A549 (cell line): ENCODE measurements at regions of chr10 and their contacts with region 1.

Region 1: GRCh38 chr10:75099952-75100763 is 11.3 kb upstream of the SAMD8 start:
- DNase-seq: peak; percentile 67 to 85
- ATAC-seq: peak; percentile 82 to 96
- H3K4me3 ChIP-seq: no peak overlapping the region
- H3K27ac ChIP-seq: peak overlapping the region in 1 of 2 experiments; percentile 55; a peak in 2 of 6 replicates
- H3K4me1 ChIP-seq: no peaks in the 10 kb centered on the region; the same call in 2 of the 3 replicates
- CTCF ChIP-seq: peak; percentile 94
- EP300 ChIP-seq: no peak
- POLR2A ChIP-seq: no peak
- RAD21 ChIP-seq: peak; percentile 97

Region 2: GRCh38 chr10:74244097-74244685 is 856.0 kb before region 1 on chr10:
- CTCF ChIA-PET with region 1: interaction called, 210 read pairs
- POLR2A ChIA-PET with region 1: no interaction called
- DNase-seq: peak in 1 of 2 experiments; percentile 61
- ATAC-seq: no peak
- H3K4me3 ChIP-seq: no peak overlapping the region
- H3K27ac ChIP-seq: no peak overlapping the region
- H3K4me1 ChIP-seq: no peaks in the 10 kb centered on the region
- CTCF ChIP-seq: peak; percentile 85
- EP300 ChIP-seq: no peak
- POLR2A ChIP-seq: no peak
- RAD21 ChIP-seq: peak; percentile 67 to 78

Region 3: GRCh38 chr10:74262856-74263255 is 837.3 kb before region 1 on chr10:
- CTCF ChIA-PET with region 1: interaction called, 20 read pairs
- POLR2A ChIA-PET with region 1: no interaction called
- DNase-seq: no peak
- ATAC-seq: no peak
- H3K4me3 ChIP-seq: no peak overlapping the region
- H3K27ac ChIP-seq: no peak overlapping the region
- H3K4me1 ChIP-seq: no peaks in the 10 kb centered on the region
- CTCF ChIP-seq: no peak
- EP300 ChIP-seq: no peak
- POLR2A ChIP-seq: no peak
- RAD21 ChIP-seq: no peak

Region 4: DNA sequence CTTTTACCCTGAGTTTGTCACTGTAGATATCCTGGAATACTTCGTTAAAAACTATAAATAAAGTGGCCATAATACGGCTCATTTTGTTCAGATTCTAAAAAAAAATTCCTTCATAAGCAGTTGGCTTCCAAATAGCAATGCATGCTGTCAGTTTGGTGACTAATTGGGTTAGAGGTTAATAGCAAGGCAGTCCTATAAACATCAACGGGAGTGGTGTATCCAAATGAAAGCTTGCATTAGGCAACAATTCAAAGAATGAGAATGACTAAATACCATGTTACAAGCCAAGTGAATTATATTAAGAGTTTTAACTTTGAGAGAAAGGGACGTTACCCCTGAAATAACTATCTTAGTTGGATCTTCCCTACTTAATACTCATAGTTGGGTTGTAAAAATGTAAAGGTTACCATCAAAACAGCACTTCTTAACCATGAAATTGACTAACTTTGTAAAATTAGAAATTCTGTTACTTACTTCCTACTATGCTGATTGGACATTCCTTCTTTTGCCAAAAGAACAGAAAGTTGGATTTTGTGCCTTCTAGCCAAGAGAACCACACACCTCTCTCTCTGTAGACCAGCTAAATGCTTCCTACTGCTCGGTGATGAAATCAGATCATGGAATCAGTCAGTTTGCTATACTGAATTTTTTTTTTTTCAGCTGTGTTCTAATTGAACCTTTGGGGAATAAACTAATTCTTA is 175.8 kb before region 1 on chr10:
- CTCF ChIA-PET with region 1: no interaction called
- POLR2A ChIA-PET with region 1: no interaction called
- DNase-seq: peak in 1 of 2 experiments; percentile 28
- ATAC-seq: peak in 1 of 2 experiments; percentile 34; a peak in 3 of 6 replicates
- H3K4me3 ChIP-seq: no peak overlapping the region
- H3K27ac ChIP-seq: peak overlapping the region in 1 of 2 experiments; percentile 61; a peak in 3 of 6 replicates
- H3K4me1 ChIP-seq: peaks cover 64% of the 10 kb centered on the region
- CTCF ChIP-seq: no peak
- EP300 ChIP-seq: no peak
- POLR2A ChIP-seq: no peak
- RAD21 ChIP-seq: no peak

Region 5: GRCh38 chr10:75111367-75111906 is 11.3 kb after region 1 on chr10 and contains the start of gene SAMD8:
- CTCF ChIA-PET with region 1: interaction called, 21 read pairs
- POLR2A ChIA-PET with region 1: no interaction called
- DNase-seq: peak in 1 of 2 experiments; percentile 98
- ATAC-seq: peak; percentile 82 to 89
- H3K4me3 ChIP-seq: peak within 1 kb of the TSS; percentile 66
- H3K27ac ChIP-seq: peak within 1 kb of the TSS; percentile 82 to 94
- H3K4me1 ChIP-seq: peaks cover 37% of the 10 kb centered on the region
- CTCF ChIP-seq: no peak
- EP300 ChIP-seq: no peak
- POLR2A ChIP-seq: peak; percentile 76
- RAD21 ChIP-seq: no peak
- polyA plus RNA-seq, gene SAMD8: 27.9 and 33.3 TPM in 2 replicates